Activated T-helper 1 cell treated with anti-CD3 and anti-CD28 coated beads, Interleukin-12 subunit alpha, Interleukin-12 subunit beta, Interleukin-2, Interleukin-4 antibody, amounts not matched to agents 30 ng/mL and 10 ng/mL and 1 ng/mL, durations not matched to agents 14 hours and 24 hours and 36 hours (primary cell): ENCODE measurements at regions of chr4 and their contacts with region 1.

Region 1: DNA sequence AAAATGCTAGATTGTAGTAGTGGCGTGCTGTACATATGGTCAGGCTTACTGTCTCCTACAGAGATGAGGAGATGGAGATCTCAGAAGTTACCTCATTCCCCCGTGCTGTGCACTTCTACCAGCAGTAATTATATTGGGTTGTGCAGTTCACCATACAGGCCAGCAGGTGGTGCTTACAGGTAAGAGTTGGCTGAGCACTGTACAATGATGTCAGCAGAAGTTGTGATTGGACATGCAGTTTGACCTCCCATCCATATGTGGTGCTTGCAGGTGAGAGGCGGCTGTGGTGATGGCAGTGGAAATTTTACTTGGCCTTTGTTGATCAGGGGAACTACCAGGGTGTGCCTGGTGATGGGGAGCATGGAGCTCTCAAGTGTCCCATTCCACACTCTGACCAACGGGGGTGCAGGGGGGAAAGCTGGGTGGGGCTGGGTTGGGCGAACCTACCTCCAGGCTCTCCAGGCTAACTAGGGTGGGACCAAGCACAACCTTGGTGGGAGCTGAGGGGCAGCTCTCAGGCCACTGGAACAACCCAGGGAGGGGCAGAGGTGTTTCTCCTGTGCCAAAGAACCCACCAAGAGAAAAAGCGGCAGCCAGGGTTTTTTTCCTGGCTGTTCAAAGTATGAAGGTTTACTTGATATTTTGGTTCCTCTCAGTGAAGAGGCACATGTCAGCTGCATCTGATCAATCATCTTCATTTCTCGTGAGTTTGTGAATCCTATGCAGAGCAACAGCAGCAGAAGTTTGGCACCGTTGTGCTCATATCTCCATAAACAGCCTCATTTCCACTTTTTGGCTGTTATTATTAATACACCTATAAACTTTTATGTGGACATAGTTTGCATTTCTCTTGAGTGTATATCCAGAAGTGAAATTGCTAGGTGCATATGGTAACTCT is 73.8 kb upstream of the FREM3 start:
- DNase-seq: peak; percentile 21
- H3K4me3 Mint-ChIP-seq: no peak overlapping the region
- H3K27ac Mint-ChIP-seq: no peak overlapping the region
- H3K4me1 Mint-ChIP-seq: no peaks in the 10 kb centered on the region
- H3K27me3 Mint-ChIP-seq: peaks cover 4% of the 10 kb centered on the region

Region 2: GRCh38 chr4:144141493-144141892 is 367.2 kb after region 1 on chr4:
- intact Hi-C with region 1: loop called (anchors 1 kb)
- DNase-seq: no peak
- H3K4me3 Mint-ChIP-seq: no peak overlapping the region
- H3K27ac Mint-ChIP-seq: no peak overlapping the region
- H3K4me1 Mint-ChIP-seq: no peaks in the 10 kb centered on the region
- H3K27me3 Mint-ChIP-seq: peaks cover 7% of the 10 kb centered on the region